ENCODE measurements at regions of chr1 and their contacts with region 1.

Region 1: DNA sequence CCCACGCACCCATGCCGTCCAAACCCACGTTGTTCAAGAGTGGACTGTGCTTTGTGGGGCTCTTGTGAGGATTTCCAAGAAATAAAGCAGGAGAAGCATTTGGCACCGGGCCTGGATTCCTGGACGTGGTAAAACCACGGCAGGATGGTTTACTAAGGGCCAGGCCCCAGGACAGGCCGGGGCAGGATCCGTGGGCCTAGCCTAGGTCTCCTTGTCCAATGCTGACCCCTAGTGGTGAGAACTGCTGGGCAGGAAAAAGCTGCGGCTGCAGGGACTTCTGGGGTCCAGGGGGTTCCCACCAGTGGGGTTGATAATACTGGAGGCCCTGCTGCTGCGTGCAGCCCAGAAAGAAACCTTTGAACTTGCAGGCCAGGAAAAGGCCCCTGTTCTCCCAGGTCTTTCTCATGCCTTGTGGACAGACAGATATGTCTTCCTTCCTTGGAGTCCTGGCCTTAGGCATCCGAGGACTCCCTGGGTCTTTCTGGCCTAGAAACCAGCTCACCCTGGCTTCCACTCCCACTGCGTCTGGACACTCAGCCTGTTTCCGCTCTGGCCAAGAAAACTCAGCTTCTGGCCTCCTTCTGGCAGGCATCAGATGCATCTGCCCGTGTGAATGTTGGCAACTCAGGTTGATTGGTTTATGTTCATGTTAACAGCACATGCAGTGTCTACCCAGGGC is 106.9 kb upstream of the TMEM51 start:
- DNase-seq: peak; percentile 61 to 77 (median 65)
- ATAC-seq: peak in 3 of 4 donors; percentile 72 to 86 (median 78)
- H3K4me3 ChIP-seq: no peak overlapping the region
- H3K27ac ChIP-seq: no peak overlapping the region
- H3K4me1 ChIP-seq: no peaks in the 10 kb centered on the region
- H3K27me3 ChIP-seq: no peaks in the 10 kb centered on the region
- CTCF ChIP-seq: peak; percentile 88 to 97 (median 92)
- POLR2A ChIP-seq: no peak

Region 2: DNA sequence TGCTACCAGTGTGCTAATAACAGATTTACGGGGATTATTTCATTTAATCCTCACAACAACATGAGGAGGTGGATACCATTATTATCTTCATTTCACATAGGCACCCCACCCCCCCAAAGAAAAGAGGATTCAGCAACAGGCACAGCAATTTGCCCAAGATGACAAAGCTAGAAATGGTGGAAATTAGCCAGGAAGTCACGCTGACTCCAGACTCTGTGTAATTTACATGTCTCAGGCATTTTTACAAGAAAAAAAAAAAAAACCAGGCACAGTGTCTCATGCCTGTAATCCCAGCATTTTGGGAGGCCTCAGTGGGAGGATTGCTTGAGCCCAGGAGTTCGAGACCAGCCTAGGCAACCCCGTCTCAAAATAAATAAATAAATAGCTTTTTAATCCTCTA is 1384.1 kb before region 1 on chr1:
- intact Hi-C with region 1: loop called in 1 of 10 experiments (anchors 10 kb)
- DNase-seq: no peak
- ATAC-seq: no peak
- H3K4me3 ChIP-seq: no peak overlapping the region
- H3K27ac ChIP-seq: peak overlapping the region in 1 of 12 donors; percentile 4
- H3K4me1 ChIP-seq: peaks cover 0 to 7% (median 0%) of the 10 kb centered on the region in 12 donors
- H3K27me3 ChIP-seq: peaks cover 0 to 6% (median 0%) of the 10 kb centered on the region in 9 donors
- CTCF ChIP-seq: no peak
- POLR2A ChIP-seq: no peak

Region 3: GRCh38 chr1:13960375-13960987 is 1086.1 kb before region 1 on chr1:
- intact Hi-C with region 1: loop called in 8 of 10 experiments (anchors 5 to 10 kb)
- DNase-seq: peak; percentile 36 to 74 (median 60)
- ATAC-seq: peak in 3 of 4 donors; percentile 66 to 83 (median 77)
- H3K4me3 ChIP-seq: no peak overlapping the region
- H3K27ac ChIP-seq: no peak overlapping the region
- H3K4me1 ChIP-seq: no peaks in the 10 kb centered on the region
- H3K27me3 ChIP-seq: peaks cover 0 to 30% (median under 1%) of the 10 kb centered on the region in 9 donors
- CTCF ChIP-seq: peak; percentile 91 to 99 (median 96)
- POLR2A ChIP-seq: no peak

Region 4: GRCh38 chr1:13965770-13966398 is 1080.7 kb before region 1 on chr1:
- intact Hi-C with region 1: loop called in 8 of 10 experiments (anchors 5 to 10 kb)
- DNase-seq: peak in 4 of 5 donors; percentile 29 to 62 (median 43)
- ATAC-seq: peak in 3 of 4 donors; percentile 74 to 88 (median 77)
- H3K4me3 ChIP-seq: no peak overlapping the region
- H3K27ac ChIP-seq: no peak overlapping the region
- H3K4me1 ChIP-seq: no peaks in the 10 kb centered on the region
- H3K27me3 ChIP-seq: peaks cover 0 to 37% (median 4%) of the 10 kb centered on the region in 9 donors
- CTCF ChIP-seq: peak in 11 of 12 donors; percentile 6 to 52 (median 42)
- POLR2A ChIP-seq: no peak

Region 5: GRCh38 chr1:14113841-14114567 is 932.6 kb before region 1 on chr1:
- intact Hi-C with region 1: loop called in 8 of 10 experiments (anchors 2 to 10 kb)
- DNase-seq: peak in 4 of 5 donors; percentile 23 to 53 (median 32)
- ATAC-seq: peak; percentile 61 to 85 (median 78)
- H3K4me3 ChIP-seq: no peak overlapping the region
- H3K27ac ChIP-seq: no peak overlapping the region
- H3K4me1 ChIP-seq: no peaks in the 10 kb centered on the region
- H3K27me3 ChIP-seq: no peaks in the 10 kb centered on the region
- CTCF ChIP-seq: peak in 11 of 12 donors; percentile 32 to 62 (median 49)
- POLR2A ChIP-seq: no peak

Region 6: DNA sequence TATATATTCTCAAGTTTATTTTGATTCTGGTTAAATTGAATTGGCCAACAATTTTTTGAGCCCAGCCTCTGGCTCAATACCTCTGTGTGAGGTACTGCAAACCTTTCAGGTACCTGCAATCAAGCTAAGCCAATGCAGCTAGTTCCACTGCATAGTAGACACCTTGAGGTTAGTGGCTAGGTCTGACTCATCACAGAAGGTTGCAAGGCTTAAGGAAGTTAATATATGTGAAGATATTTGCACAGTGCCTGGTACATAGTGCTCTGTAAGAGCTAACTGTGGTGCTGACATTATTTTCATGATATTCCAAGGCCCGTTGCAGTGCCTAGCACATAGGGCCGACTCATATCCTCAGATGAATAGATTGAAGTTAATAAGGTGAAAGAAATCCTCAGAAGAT is 778.6 kb before region 1 on chr1:
- intact Hi-C with region 1: loop called in 1 of 10 experiments (anchors 10 kb)
- DNase-seq: no peak
- ATAC-seq: no peak
- H3K4me3 ChIP-seq: no peak overlapping the region
- H3K27ac ChIP-seq: no peak overlapping the region
- H3K4me1 ChIP-seq: no peaks in the 10 kb centered on the region
- H3K27me3 ChIP-seq: peaks cover 0 to 7% (median 0%) of the 10 kb centered on the region in 9 donors
- CTCF ChIP-seq: no peak
- POLR2A ChIP-seq: no peak

Region 7: DNA sequence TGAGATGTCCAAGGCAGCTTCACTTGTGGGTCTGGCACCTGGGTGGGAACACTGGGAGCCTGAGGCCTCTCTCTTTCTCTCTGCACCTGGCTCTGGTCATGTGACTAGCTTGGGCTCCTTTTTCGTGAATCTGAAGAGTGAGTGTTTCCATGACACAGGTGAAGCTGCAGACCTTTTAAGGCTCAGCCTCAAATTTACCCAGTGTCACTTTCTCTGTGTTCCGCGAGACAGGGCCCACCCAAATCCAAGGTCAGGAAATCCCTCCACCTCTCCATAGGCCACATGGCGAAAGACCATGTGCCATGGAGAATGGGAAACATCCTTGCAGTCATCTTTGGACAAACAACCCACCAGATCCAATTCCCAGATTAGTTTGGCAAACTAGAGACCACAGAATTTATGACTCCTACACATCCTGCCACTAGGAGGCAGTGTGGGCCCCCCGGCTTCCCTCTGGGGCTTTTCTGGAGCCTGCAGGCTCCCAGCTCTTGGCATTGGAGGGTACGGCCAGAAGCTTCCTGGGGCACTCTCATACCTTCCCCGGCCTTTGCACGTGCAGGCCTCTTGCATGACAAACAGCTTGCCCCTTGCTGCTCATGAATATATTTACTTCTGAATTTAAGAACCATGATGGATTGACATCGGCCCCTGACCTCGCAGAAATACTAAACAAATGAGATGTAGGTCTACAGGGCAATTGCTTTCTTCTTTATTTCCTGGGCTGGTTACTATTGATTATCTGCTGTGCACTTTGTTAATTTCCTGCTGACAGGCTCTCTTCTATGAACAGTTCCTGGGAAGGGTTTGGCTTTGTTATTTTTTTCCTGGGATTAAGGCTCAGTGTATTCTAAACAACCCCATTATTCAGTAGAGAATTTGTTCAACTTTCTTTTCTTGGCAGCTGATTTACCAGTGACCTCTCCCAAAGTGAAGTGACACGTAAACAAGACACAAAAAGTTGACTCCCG is 267.4 kb before region 1 on chr1:
- intact Hi-C with region 1: loop called in 9 of 10 experiments (anchors 1 to 10 kb)
- DNase-seq: peak in 1 of 5 donors; percentile 22
- ATAC-seq: no peak
- H3K4me3 ChIP-seq: no peak overlapping the region
- H3K27ac ChIP-seq: no peak overlapping the region
- H3K4me1 ChIP-seq: no peaks in the 10 kb centered on the region
- H3K27me3 ChIP-seq: peaks cover 0 to 2% (median 0%) of the 10 kb centered on the region in 9 donors
- CTCF ChIP-seq: peak; percentile 48 to 73 (median 64)
- POLR2A ChIP-seq: no peak

Measured in heart left ventricle (tissue), 16 donors.